CD4-positive, alpha-beta memory T cell (primary cell): ENCODE measurements at regions of chr14 and their contacts with region 1.

Region 1: DNA sequence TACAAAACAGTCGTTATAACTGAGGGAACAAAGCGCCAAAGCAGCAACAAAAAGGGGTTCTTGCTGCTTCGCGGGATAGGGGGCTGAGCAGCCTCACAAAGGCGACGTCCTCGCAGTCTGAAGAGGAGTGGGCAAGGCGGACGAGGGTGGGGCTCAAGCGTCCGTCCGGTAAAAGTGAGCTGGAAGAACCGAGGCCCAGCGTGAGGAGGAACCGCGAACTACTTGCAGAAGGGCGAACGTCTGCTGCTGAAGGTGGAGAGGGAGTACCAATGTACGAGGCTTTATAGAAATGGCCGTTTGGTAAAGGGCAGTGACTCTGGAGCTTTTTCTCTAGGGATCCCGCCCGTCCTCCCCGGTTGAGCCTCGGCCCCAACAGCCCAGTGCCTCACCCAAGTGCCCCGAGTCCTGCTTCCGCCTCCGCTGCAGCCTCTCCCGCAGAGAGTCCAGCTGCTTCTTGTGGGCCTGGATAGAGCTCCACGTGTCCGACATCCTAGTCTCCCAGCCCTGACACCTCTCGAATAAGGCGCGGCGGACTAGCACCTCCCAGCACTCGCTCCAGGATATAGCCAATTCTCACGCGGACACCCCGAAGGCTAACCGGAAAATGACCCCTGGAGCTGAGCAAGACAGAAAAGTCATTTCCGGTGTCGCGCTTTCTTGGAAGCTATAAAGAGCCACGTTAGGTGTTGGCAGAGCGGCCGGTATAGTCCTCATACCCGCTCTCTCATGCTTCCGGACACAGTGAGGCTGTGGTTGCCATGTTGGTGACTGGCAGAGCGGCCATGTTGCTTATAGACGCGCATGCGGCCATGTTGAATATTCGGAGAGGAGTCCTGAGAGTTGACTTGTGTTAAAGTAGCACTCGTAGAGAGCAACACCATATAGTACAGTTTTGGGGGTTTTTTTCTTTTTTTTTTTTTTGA is at the start of gene METTL3:
- DNase-seq: peak; percentile 91 to 97 (median 92)
- H3K4me3 ChIP-seq: peak within 1 kb of the TSS; percentile 93 to 100
- H3K4me3 Mint-ChIP-seq: peak within 1 kb of the TSS; percentile 97 to 100 (median 98)
- H3K27ac ChIP-seq: peak within 1 kb of the TSS; percentile 88
- H3K27ac Mint-ChIP-seq: peak within 1 kb of the TSS; percentile 94 to 100 (median 99)
- H3K4me1 ChIP-seq: peaks cover 38% of the 10 kb centered on the region
- H3K4me1 Mint-ChIP-seq: peaks cover 27 to 51% (median 37%) of the 10 kb centered on the region in 4 donors
- H3K27me3 ChIP-seq: no peaks in the 10 kb centered on the region
- H3K27me3 Mint-ChIP-seq: no peaks in the 10 kb centered on the region
- total RNA-seq, gene METTL3: 93.4 to 98.9 TPM

Region 2: GRCh38 chr14:21437063-21437901 is 73.7 kb before region 1 on chr14:
- CTCF ChIA-PET with region 1: interaction called, 5 read pairs
- POLR2A ChIA-PET with region 1: interaction called, 22 read pairs
- intact Hi-C with region 1: loop called (anchors 1 kb)
- DNase-seq: peak; percentile 98 to 99 (median 98)
- H3K4me3 ChIP-seq: peak overlapping the region; percentile 64 to 95
- H3K4me3 Mint-ChIP-seq: peak overlapping the region; percentile 94 to 99 (median 96)
- H3K27ac ChIP-seq: peak overlapping the region; percentile 85
- H3K27ac Mint-ChIP-seq: peak overlapping the region; percentile 93 to 99 (median 96)
- H3K4me1 ChIP-seq: peaks cover 38% of the 10 kb centered on the region
- H3K4me1 Mint-ChIP-seq: peaks cover 49 to 74% (median 62%) of the 10 kb centered on the region in 4 donors
- H3K27me3 ChIP-seq: no peaks in the 10 kb centered on the region
- H3K27me3 Mint-ChIP-seq: no peaks in the 10 kb centered on the region

Region 3: GRCh38 chr14:21476925-21477681 is 33.9 kb before region 1 on chr14 and contains the starts of genes RAB2B and TOX4:
- CTCF ChIA-PET with region 1: interaction called, 6 read pairs
- POLR2A ChIA-PET with region 1: interaction called, 49 read pairs
- intact Hi-C with region 1: loop called (anchors 1 kb)
- DNase-seq: peak; percentile 98
- H3K4me3 ChIP-seq: peak within 1 kb of the TSS; percentile 69 to 97
- H3K4me3 Mint-ChIP-seq: peak within 1 kb of the TSS; percentile 98 to 100 (median 100)
- H3K27ac ChIP-seq: peak within 1 kb of the TSS; percentile 81
- H3K27ac Mint-ChIP-seq: peak within 1 kb of the TSS; percentile 95 to 100 (median 100)
- H3K4me1 ChIP-seq: peaks cover 27% of the 10 kb centered on the region
- H3K4me1 Mint-ChIP-seq: peaks cover 28 to 63% (median 45%) of the 10 kb centered on the region in 4 donors
- H3K27me3 ChIP-seq: no peaks in the 10 kb centered on the region
- H3K27me3 Mint-ChIP-seq: no peaks in the 10 kb centered on the region
- total RNA-seq, gene RAB2B: 29.3 to 30.4 TPM
- total RNA-seq, gene TOX4: 83.6 to 86.0 TPM

Region 4: GRCh38 chr14:21525962-21526671 is 15.1 kb after region 1 on chr14 and contains the start of gene SALL2:
- CTCF ChIA-PET with region 1: interaction called, 15 read pairs
- POLR2A ChIA-PET with region 1: interaction called, 55 read pairs
- intact Hi-C with region 1: loop called (anchors 1 kb)
- DNase-seq: peak; percentile 44 to 78 (median 45)
- H3K4me3 ChIP-seq: peak within 1 kb of the TSS; percentile 42 to 67
- H3K4me3 Mint-ChIP-seq: peak within 1 kb of the TSS; percentile 81 to 90 (median 84)
- H3K27ac ChIP-seq: peak within 1 kb of the TSS; percentile 43
- H3K27ac Mint-ChIP-seq: peak within 1 kb of the TSS; percentile 21 to 92 (median 81)
- H3K4me1 ChIP-seq: peaks cover 15% of the 10 kb centered on the region
- H3K4me1 Mint-ChIP-seq: peaks cover 7 to 20% (median 11%) of the 10 kb centered on the region in 4 donors
- H3K27me3 ChIP-seq: no peaks in the 10 kb centered on the region
- H3K27me3 Mint-ChIP-seq: no peaks in the 10 kb centered on the region
- total RNA-seq, gene SALL2: 6.5 to 6.6 TPM

Region 5: GRCh38 chr14:21572604-21573003 is 61.6 kb after region 1 on chr14:
- CTCF ChIA-PET with region 1: no interaction called
- POLR2A ChIA-PET with region 1: no interaction called
- intact Hi-C with region 1: no loop called
- DNase-seq: no peak
- H3K4me3 ChIP-seq: no peak overlapping the region
- H3K4me3 Mint-ChIP-seq: no peak overlapping the region
- H3K27ac ChIP-seq: no peak overlapping the region
- H3K27ac Mint-ChIP-seq: no peak overlapping the region
- H3K4me1 ChIP-seq: no peaks in the 10 kb centered on the region
- H3K4me1 Mint-ChIP-seq: no peaks in the 10 kb centered on the region
- H3K27me3 ChIP-seq: no peaks in the 10 kb centered on the region
- H3K27me3 Mint-ChIP-seq: peaks cover 16 to 28% of the 10 kb centered on the region in 2 donors

Region 6: DNA sequence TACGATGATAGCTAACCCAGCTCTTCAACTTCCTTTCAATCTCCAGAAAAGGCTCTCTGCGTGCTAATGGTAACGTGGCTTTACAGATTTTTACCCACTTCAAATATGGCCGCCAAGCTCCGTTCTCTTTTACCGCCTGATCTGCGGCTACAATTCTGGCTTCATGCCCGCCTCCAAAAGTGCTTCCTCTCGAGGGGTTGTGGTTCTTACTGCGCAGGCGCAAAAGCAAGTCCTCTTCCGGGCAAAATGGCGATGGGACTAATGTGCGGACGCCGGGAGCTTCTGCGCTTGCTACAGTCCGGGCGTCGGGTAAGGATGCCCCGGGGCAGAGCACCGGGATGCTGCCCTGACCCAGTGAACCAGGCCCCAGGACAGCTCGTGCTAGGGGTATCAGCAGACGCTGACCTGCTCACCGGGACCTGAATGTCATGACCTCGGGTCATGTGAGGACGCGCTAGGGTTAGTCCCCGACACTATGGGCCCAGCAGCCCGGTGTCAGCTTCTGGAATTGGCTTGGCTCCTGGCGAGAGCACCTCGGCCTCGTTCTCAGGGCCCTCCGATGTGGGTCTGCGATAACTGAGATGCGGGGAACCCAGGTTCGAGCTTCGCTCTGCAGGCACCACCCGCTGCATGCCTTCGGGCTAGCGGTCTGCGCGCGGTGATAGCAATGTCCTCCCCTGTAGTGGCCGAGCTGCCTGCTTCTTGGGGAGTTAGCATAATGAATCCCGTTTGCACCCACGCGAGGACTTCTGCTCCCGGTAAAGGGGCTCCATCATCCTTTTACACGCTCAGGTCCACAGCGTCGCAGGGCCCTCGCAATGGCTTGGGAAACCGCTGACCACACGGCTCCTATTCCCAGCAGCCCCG is 1255.7 kb after region 1 on chr14 and contains the start of gene OXA1L:
- CTCF ChIA-PET with region 1: no interaction called
- POLR2A ChIA-PET with region 1: no interaction called
- intact Hi-C with region 1: loop called (anchors 2 kb)
- DNase-seq: peak; percentile 95 to 98 (median 98)
- H3K4me3 ChIP-seq: peak within 1 kb of the TSS; percentile 62 to 88
- H3K4me3 Mint-ChIP-seq: peak within 1 kb of the TSS; percentile 85 to 96 (median 94)
- H3K27ac ChIP-seq: peak within 1 kb of the TSS; percentile 88
- H3K27ac Mint-ChIP-seq: peak within 1 kb of the TSS; percentile 86 to 100 (median 98)
- H3K4me1 ChIP-seq: peaks cover 24% of the 10 kb centered on the region
- H3K4me1 Mint-ChIP-seq: peaks cover 26 to 39% (median 34%) of the 10 kb centered on the region in 4 donors
- H3K27me3 ChIP-seq: no peaks in the 10 kb centered on the region
- H3K27me3 Mint-ChIP-seq: no peaks in the 10 kb centered on the region
- total RNA-seq, gene OXA1L: 129 to 137 TPM